Endothelial cell of umbilical vein (primary cell): ENCODE measurements at regions of chr3 and their contacts with region 1.

Region 1: GRCh38 chr3:30199096-30199759 is 407.2 kb upstream of the TGFBR2 start:
- DNase-seq: peak; percentile 78
- H3K4me3 ChIP-seq: no peak overlapping the region
- H3K27ac ChIP-seq: no peak overlapping the region
- H3K4me1 ChIP-seq: peaks cover 17% of the 10 kb centered on the region
- H3K27me3 ChIP-seq: no peaks in the 10 kb centered on the region
- CTCF ChIP-seq: peak; percentile 50 to 55
- POLR2A ChIP-seq: no peak

Region 2: DNA sequence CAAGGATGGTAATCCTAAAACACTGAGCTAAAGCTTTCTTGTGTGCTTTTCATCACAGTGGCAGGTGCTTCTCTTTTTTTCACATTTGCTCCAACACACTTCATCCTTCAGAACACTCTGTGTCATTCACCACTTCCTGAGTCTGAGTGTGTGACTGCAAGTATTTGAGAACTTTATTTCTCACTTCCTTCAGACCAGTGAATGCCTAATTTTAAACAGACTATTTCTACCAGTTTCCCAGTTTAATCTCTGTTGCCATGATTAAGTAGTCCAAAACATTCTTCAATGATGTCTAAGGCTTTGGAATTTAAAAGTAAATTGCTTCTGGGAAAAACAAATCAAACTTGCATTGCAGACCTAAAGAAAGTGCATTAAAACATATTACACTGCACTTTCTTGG is 377.2 kb before region 1 on chr3:
- CTCF ChIA-PET with region 1: no interaction called
- POLR2A ChIA-PET with region 1: no interaction called
- dilution Hi-C with region 1: no loop called
- intact Hi-C with region 1: no loop called
- DNase-seq: peak; percentile 28
- H3K4me3 ChIP-seq: no peak overlapping the region
- H3K27ac ChIP-seq: no peak overlapping the region
- H3K4me1 ChIP-seq: peaks cover 3% of the 10 kb centered on the region
- H3K27me3 ChIP-seq: no peaks in the 10 kb centered on the region
- CTCF ChIP-seq: no peak
- POLR2A ChIP-seq: no peak

Region 3: GRCh38 chr3:30042274-30042859 is 156.9 kb before region 1 on chr3:
- CTCF ChIA-PET with region 1: interaction called, 220 read pairs
- POLR2A ChIA-PET with region 1: interaction called, 3 read pairs
- dilution Hi-C with region 1: no loop called
- intact Hi-C with region 1: loop called (anchors 1 kb)
- DNase-seq: peak; percentile 88
- H3K4me3 ChIP-seq: no peak overlapping the region
- H3K27ac ChIP-seq: no peak overlapping the region
- H3K4me1 ChIP-seq: peaks cover 25% of the 10 kb centered on the region
- H3K27me3 ChIP-seq: no peaks in the 10 kb centered on the region
- CTCF ChIP-seq: peak; percentile 56
- POLR2A ChIP-seq: no peak

Region 4: GRCh38 chr3:30124435-30125395 is 74.5 kb before region 1 on chr3:
- CTCF ChIA-PET with region 1: no interaction called
- POLR2A ChIA-PET with region 1: no interaction called
- dilution Hi-C with region 1: no loop called
- intact Hi-C with region 1: no loop called
- DNase-seq: no peak
- H3K4me3 ChIP-seq: no peak overlapping the region
- H3K27ac ChIP-seq: no peak overlapping the region
- H3K4me1 ChIP-seq: no peaks in the 10 kb centered on the region
- H3K27me3 ChIP-seq: no peaks in the 10 kb centered on the region
- CTCF ChIP-seq: no peak
- POLR2A ChIP-seq: no peak

Region 5: DNA sequence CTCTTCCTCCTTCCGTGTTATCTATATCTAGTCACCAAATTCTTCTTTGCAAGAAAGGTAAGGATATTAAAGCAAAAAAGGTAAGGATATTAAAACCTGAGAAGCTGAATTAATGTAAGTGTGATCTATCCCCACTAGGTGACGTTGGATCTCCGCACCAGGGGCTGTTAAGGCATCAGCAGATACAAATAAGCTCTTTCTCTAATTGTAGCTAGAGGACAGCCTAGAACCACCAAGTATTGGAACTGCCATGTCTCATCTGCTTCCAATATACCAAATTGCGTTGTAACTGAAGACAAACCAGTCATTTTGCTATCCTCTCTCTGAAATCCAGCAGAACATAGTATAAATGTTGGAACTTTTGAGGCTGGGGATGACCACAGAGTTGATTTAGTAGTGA is 64.0 kb before region 1 on chr3:
- CTCF ChIA-PET with region 1: interaction called, 26 read pairs
- POLR2A ChIA-PET with region 1: no interaction called
- dilution Hi-C with region 1: no loop called
- intact Hi-C with region 1: no loop called
- DNase-seq: no peak
- H3K4me3 ChIP-seq: no peak overlapping the region
- H3K27ac ChIP-seq: no peak overlapping the region
- H3K4me1 ChIP-seq: no peaks in the 10 kb centered on the region
- H3K27me3 ChIP-seq: no peaks in the 10 kb centered on the region
- CTCF ChIP-seq: no peak
- POLR2A ChIP-seq: no peak

Region 6: GRCh38 chr3:30180310-30181177 is 18.7 kb before region 1 on chr3:
- CTCF ChIA-PET with region 1: interaction called, 20 read pairs
- POLR2A ChIA-PET with region 1: no interaction called
- dilution Hi-C with region 1: no loop called
- intact Hi-C with region 1: no loop called
- DNase-seq: no peak
- H3K4me3 ChIP-seq: no peak overlapping the region
- H3K27ac ChIP-seq: no peak overlapping the region
- H3K4me1 ChIP-seq: peaks cover 3% of the 10 kb centered on the region
- H3K27me3 ChIP-seq: peaks cover 2% of the 10 kb centered on the region in 2 experiments
- CTCF ChIP-seq: no peak
- POLR2A ChIP-seq: no peak

Region 7: GRCh38 chr3:30319713-30320112 is 120.5 kb after region 1 on chr3:
- CTCF ChIA-PET with region 1: interaction called, 17 read pairs
- POLR2A ChIA-PET with region 1: no interaction called
- dilution Hi-C with region 1: no loop called
- intact Hi-C with region 1: no loop called
- DNase-seq: peak; percentile 60
- H3K4me3 ChIP-seq: no peak overlapping the region
- H3K27ac ChIP-seq: no peak overlapping the region
- H3K4me1 ChIP-seq: no peaks in the 10 kb centered on the region
- H3K27me3 ChIP-seq: no peaks in the 10 kb centered on the region
- CTCF ChIP-seq: peak; percentile 33 to 39
- POLR2A ChIP-seq: no peak

Region 8: DNA sequence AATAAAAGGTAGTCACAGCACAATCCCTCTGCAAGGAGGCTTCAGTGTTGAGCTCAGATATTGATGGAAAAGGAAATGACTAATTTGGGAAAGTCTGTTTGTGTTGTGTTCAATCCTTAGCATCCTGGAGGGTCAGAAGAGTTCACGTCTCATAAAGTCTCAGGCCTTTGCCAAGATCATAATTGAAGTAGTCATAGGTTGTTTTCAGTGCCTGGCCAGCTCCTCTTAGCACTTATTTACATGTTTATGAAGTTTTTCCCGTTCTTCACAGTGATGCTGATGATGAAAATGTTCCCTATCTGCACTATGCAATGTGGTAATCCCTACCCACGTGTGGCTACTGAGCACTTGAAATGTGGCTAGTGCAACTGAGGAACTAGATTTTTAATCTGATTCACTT is 345.6 kb after region 1 on chr3:
- CTCF ChIA-PET with region 1: interaction called, 10 read pairs
- POLR2A ChIA-PET with region 1: no interaction called
- dilution Hi-C with region 1: no loop called
- intact Hi-C with region 1: no loop called
- DNase-seq: peak; percentile 99
- H3K4me3 ChIP-seq: no peak overlapping the region
- H3K27ac ChIP-seq: peak overlapping the region; percentile 95
- H3K4me1 ChIP-seq: peaks cover 37% of the 10 kb centered on the region
- H3K27me3 ChIP-seq: no peaks in the 10 kb centered on the region
- CTCF ChIP-seq: no peak
- POLR2A ChIP-seq: no peak

Region 9: GRCh38 chr3:30751610-30752299 is 552.5 kb after region 1 on chr3:
- CTCF ChIA-PET with region 1: interaction called, 24 read pairs
- POLR2A ChIA-PET with region 1: no interaction called
- dilution Hi-C with region 1: no loop called
- intact Hi-C with region 1: loop called (anchors 1 kb)
- DNase-seq: peak; percentile 78
- H3K4me3 ChIP-seq: no peak overlapping the region
- H3K27ac ChIP-seq: no peak overlapping the region
- H3K4me1 ChIP-seq: peaks cover 21% of the 10 kb centered on the region
- H3K27me3 ChIP-seq: no peaks in the 10 kb centered on the region
- CTCF ChIP-seq: peak; percentile 49 to 65
- POLR2A ChIP-seq: no peak

Region 10: DNA sequence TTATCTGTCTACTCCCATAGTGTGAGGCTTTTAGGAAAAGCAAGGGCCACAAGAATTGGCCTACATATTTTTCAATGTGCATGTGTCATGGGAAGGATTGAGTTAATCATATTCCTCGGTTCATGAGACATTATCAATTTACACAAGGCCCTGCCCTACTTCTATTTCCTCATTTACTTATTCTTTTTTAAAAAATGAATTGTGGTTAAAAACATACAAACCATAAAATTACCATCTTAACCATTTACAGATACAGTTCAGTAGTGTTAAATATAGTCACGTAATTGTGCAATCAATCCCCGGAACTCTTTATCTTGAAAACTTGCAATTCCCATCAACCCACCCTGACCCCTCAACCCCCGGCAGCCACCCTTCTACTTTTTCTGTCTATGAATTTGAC is 979.2 kb after region 1 on chr3:
- CTCF ChIA-PET with region 1: no interaction called
- POLR2A ChIA-PET with region 1: no interaction called
- dilution Hi-C with region 1: no loop called
- intact Hi-C with region 1: no loop called
- DNase-seq: no peak
- H3K4me3 ChIP-seq: no peak overlapping the region
- H3K27ac ChIP-seq: no peak overlapping the region
- H3K4me1 ChIP-seq: no peaks in the 10 kb centered on the region
- H3K27me3 ChIP-seq: no peaks in the 10 kb centered on the region
- CTCF ChIP-seq: no peak
- POLR2A ChIP-seq: no peak